Activated CD4-positive, alpha-beta memory T cell treated with anti-CD3 and anti-CD28 coated beads for 36 hours (primary cell): ENCODE measurements at regions of chr21 and their contacts with region 1.

Region 1: GRCh38 chr21:33244082-33244778 is 14.5 kb downstream of the IFNAR2 start:
- DNase-seq: no peak
- H3K4me3 Mint-ChIP-seq: peak overlapping the region; percentile 34
- H3K27ac Mint-ChIP-seq: peak overlapping the region; percentile 89
- H3K4me1 Mint-ChIP-seq: peaks cover 82% of the 10 kb centered on the region
- H3K27me3 Mint-ChIP-seq: no peaks in the 10 kb centered on the region

Region 2: DNA sequence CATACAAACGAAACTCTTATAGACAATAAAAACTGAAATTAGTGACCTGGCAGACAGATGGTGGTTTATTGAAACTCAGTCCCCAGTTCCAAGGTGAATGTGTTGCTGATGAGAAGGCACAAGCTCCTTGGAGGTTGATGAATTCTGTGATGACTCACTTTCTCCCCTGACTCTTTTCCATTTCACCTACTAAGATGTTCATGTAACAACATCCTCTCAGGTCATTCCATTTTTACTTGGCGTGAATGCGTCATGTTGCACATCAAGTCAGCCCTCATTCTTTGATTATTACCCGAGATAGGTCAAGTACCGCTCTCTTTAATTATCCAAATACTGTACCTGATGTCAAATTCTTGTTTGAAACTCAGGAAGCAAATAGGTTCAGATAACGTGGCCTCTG is 11.8 kb after region 1 on chr21:
- CTCF ChIA-PET with region 1: no interaction called
- POLR2A ChIA-PET with region 1: interaction called, 10 read pairs
- intact Hi-C with region 1: loop called (anchors 1 kb)
- DNase-seq: peak; percentile 49
- H3K4me3 Mint-ChIP-seq: peak overlapping the region; percentile 8
- H3K27ac Mint-ChIP-seq: peak overlapping the region; percentile 71
- H3K4me1 Mint-ChIP-seq: peaks cover 65% of the 10 kb centered on the region
- H3K27me3 Mint-ChIP-seq: no peaks in the 10 kb centered on the region